Activated B cell treated with CpG ODN at 0.5 μM for 24 hours (primary cell): ENCODE measurements at regions of chr6 and their contacts with region 1.

Region 1: DNA sequence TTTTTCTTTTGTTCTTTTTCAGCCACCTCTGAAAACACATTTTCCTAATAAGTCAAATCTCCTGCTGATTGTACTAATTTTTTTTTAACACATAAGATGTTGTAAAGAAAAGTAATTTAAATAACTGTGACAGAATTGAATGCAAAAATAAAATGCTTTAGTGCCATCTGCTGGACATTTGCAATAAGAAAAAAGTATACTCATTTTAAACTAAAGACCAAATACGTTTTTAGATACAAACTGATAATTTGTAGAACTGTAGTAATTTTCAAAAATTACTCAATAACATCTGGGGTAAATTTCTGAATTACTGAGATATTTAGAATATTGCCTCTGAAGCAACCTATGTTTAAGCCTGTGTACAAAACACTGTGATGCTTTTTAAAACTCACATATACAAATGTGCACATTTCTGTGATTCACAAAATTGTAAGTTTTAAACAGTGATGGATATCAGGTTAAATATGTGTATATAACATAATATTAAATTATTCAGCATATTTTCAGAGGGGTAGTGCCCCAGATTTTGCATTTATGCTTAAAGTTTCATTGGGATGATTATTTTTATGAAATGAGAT is 198.7 kb downstream of the RIMS1 start:
- DNase-seq: no peak
- ATAC-seq: no peak
- H3K4me3 Mint-ChIP-seq: no peak overlapping the region
- H3K27ac Mint-ChIP-seq: no peak overlapping the region
- H3K4me1 Mint-ChIP-seq: no peaks in the 10 kb centered on the region
- H3K27me3 Mint-ChIP-seq: peaks cover 3% of the 10 kb centered on the region
- CTCF ChIP-seq: no peak

Region 2: GRCh38 chr6:71383901-71384489 is 701.1 kb before region 1 on chr6:
- CTCF ChIA-PET with region 1: interaction called, 4 read pairs
- POLR2A ChIA-PET with region 1: no interaction called
- intact Hi-C with region 1: loop called (anchors 1 kb)
- DNase-seq: no peak
- ATAC-seq: no peak
- H3K4me3 Mint-ChIP-seq: no peak overlapping the region
- H3K27ac Mint-ChIP-seq: no peak overlapping the region
- H3K4me1 Mint-ChIP-seq: peaks cover 3% of the 10 kb centered on the region
- H3K27me3 Mint-ChIP-seq: no peaks in the 10 kb centered on the region
- CTCF ChIP-seq: no peak

Region 3: DNA sequence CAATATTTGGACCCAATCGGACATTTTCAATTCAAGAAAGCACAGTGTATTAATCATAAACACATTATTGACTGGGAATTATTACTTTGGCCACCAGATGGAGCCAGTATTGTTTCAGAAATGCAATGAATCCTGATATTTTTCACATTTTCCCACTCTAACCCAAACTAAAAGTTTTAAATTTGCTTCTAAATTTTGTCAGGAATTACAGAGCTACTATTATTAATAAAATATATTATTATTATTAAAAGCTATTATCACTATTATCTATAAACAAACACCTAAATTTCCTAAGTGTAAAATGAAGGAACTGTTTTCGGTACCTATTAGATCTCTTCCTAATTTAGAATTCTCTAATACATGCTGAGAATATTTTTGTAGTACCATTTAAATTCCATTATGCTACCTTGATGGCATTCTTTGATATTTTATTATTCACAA is 551.1 kb before region 1 on chr6:
- CTCF ChIA-PET with region 1: interaction called, 3 read pairs
- POLR2A ChIA-PET with region 1: no interaction called
- intact Hi-C with region 1: loop called (anchors 1 kb)
- DNase-seq: no peak
- ATAC-seq: no peak
- H3K4me3 Mint-ChIP-seq: no peak overlapping the region
- H3K27ac Mint-ChIP-seq: no peak overlapping the region
- H3K4me1 Mint-ChIP-seq: no peaks in the 10 kb centered on the region
- H3K27me3 Mint-ChIP-seq: peaks cover 5% of the 10 kb centered on the region
- CTCF ChIP-seq: peak; percentile 23